ENCODE measurements at regions of chr21 and their contacts with region 1.

Region 1: GRCh38 chr21:28247454-28248020 is 745.1 kb downstream of the LTN1 start:
- DNase-seq: peak; percentile 33
- ATAC-seq: peak; percentile 26; the same call in 1 of the 2 replicates
- H3K4me3 ChIP-seq: no peak overlapping the region
- H3K27ac ChIP-seq: no peak overlapping the region
- H3K4me1 ChIP-seq: peaks cover 12% of the 10 kb centered on the region; the same call in 1 of the 2 replicates
- H3K27me3 ChIP-seq: no peaks in the 10 kb centered on the region
- CTCF ChIP-seq: no peak

Region 2: GRCh38 chr21:28135646-28136045 is 111.9 kb before region 1 on chr21:
- CTCF ChIA-PET with region 1: no interaction called
- POLR2A ChIA-PET with region 1: no interaction called
- intact Hi-C with region 1: loop called (anchors 5 kb)
- DNase-seq: no peak
- ATAC-seq: no peak
- H3K4me3 ChIP-seq: no peak overlapping the region
- H3K27ac ChIP-seq: no peak overlapping the region
- H3K4me1 ChIP-seq: no peaks in the 10 kb centered on the region
- H3K27me3 ChIP-seq: no peaks in the 10 kb centered on the region
- CTCF ChIP-seq: no peak

Measured in PC-3 (cell line).